ENCODE measurements at regions of chr15 and their contacts with region 1.

Region 1: DNA sequence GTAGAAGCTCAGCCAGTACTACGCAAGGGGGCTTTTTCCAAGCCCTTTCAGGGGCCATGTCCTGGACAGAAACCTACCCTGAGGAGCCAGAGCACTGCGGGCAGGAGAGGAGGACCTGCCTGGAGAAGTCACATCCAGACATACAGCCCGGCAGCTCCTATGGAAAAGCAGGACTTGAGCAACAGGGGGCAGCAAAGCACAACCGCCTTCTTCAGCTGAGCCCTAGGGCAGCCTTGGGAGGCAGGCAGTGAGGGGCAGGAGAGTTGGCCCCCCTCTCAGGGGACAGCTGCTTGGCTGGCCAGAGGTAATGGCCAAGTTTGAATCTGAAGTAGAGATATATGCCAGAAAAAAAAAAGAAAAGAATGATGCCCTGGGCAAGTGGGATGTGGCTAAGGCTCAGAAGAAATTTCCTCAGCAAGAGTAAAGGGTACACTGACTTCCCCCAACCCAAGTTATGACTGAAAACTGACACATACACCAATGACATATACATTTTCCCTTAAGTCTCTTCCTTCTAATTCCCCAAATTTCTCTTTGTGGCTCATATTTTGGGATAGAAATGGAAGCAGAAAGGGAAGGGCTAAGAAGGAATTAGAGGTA is 56.9 kb downstream of the CYP19A1 start:
- DNase-seq: peak; percentile 57
- ATAC-seq: no peak
- H3K4me3 Mint-ChIP-seq: no peak overlapping the region
- H3K27ac Mint-ChIP-seq: no peak overlapping the region
- H3K4me1 Mint-ChIP-seq: peaks cover 16% of the 10 kb centered on the region
- H3K27me3 Mint-ChIP-seq: peaks cover 35% of the 10 kb centered on the region

Region 2: GRCh38 chr15:51260212-51260611 is 21.3 kb before region 1 on chr15:
- CTCF ChIA-PET with region 1: no interaction called
- DNase-seq: no peak
- ATAC-seq: no peak
- H3K4me3 Mint-ChIP-seq: no peak overlapping the region
- H3K27ac Mint-ChIP-seq: no peak overlapping the region
- H3K4me1 Mint-ChIP-seq: no peaks in the 10 kb centered on the region
- H3K27me3 Mint-ChIP-seq: peaks cover 20% of the 10 kb centered on the region

Region 3: DNA sequence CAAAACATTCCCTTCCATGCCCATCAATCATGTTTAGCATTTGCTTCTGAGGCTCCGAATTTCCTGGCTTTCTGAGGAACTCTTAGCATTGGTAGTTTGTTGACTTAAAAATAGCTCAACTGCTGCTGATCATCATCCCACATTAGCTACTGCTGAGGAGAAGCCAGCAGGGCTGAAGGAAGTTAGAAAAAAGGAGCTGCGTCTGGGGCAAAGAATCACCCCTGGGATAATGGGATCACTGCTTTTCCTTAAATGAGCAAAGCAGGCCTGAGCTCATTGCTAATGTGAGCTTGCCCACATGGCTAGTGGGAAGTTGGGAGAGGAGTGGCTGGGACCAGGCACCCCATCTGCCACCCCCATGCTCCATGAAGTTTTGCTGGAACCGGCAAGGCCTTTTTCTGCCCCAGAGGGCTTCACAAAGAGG is 17.2 kb after region 1 on chr15:
- CTCF ChIA-PET with region 1: no interaction called
- DNase-seq: no peak
- ATAC-seq: no peak
- H3K4me3 Mint-ChIP-seq: no peak overlapping the region
- H3K27ac Mint-ChIP-seq: no peak overlapping the region
- H3K4me1 Mint-ChIP-seq: no peaks in the 10 kb centered on the region
- H3K27me3 Mint-ChIP-seq: peaks cover 35% of the 10 kb centered on the region

Region 4: DNA sequence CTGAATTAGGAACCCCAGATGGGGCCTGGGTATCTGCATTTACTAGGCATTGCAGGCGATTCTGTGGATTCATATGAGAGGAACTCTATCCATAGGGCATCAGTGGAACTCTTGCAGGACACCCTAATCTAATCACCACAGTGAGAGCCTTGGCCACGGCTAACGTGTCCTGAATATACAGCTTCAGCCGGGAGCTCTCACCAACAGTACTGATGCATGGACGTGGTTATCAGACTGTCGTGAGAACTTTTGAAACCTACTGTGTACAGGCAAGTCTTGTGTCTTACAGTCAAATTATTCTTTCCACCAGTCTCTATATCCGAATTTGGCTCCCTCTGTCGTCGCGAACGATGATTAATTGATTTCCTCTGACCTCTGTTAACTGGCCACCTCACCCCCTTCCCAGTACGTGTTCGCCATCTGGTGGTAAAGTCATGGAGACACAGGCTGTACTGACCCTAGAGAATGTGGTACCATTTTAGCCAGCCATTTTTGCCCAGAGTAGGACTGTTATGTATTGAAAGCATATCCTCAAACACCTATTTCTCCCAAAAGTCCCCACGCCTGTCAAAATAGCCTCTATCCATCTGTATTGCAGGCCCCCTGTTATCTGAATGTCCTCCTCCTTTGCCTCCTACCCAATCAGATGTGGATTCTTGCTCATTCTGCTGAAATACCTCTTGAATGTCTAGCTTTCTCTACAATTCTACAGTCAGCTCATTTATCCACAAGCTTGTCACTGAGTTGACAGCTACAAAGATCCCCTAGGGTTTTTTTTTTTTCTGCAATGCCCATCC is 99.7 kb after region 1 on chr15:
- CTCF ChIA-PET with region 1: interaction called, 11 read pairs
- DNase-seq: peak; percentile 68
- ATAC-seq: peak; percentile 82
- H3K4me3 Mint-ChIP-seq: no peak overlapping the region
- H3K27ac Mint-ChIP-seq: no peak overlapping the region
- H3K4me1 Mint-ChIP-seq: no peaks in the 10 kb centered on the region
- H3K27me3 Mint-ChIP-seq: peaks cover 24% of the 10 kb centered on the region

Measured in activated CD8-positive, alpha-beta memory T cell treated with anti-CD3 and anti-CD28 coated beads, Interleukin-2, amount 10 ng/mL, durations not matched to agents 7 days and 5 days (primary cell).